ENCODE measurements at regions of chr22 and their contacts with region 1.

Region 1: GRCh38 chr22:33271390-33272161 is 213.4 kb upstream of the SYN3 start:
- DNase-seq: peak; percentile 13 to 81
- H3K4me3 ChIP-seq: peak overlapping the region in 1 of 2 donors; percentile 31
- H3K27ac ChIP-seq: peak overlapping the region in 1 of 2 donors; percentile 55
- H3K4me1 ChIP-seq: peaks cover 5 to 7% of the 10 kb centered on the region in 2 donors
- H3K27me3 ChIP-seq: no peaks in the 10 kb centered on the region
- CTCF ChIP-seq: peak in 2 of 3 experiments; percentile 8 to 29

Region 2: DNA sequence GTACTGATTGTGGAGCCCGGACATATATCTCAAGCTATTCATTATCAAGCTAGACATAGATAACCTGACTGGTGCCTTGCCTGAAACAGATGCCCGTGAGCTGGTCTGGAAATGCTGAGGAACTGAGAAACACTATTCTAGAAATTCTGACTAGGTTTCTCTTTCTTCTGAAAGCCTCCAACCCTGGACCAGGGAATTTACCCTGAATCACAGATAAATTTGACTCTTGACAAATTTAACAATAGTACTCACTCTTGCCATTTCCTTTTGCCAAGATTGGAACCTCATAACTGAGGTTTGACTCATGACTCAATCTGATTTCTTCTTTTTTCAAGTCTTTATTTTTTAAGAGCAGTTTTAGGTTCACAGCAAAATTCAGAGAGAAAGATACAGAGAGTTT is 23.8 kb before region 1 on chr22:
- intact Hi-C with region 1: loop called (anchors 2 kb)
- DNase-seq: no peak
- H3K4me3 ChIP-seq: no peak overlapping the region
- H3K27ac ChIP-seq: peak overlapping the region; percentile 4 to 6
- H3K4me1 ChIP-seq: peaks cover 0 to 7% of the 10 kb centered on the region in 2 donors
- H3K27me3 ChIP-seq: no peaks in the 10 kb centered on the region
- CTCF ChIP-seq: no peak

Region 3: DNA sequence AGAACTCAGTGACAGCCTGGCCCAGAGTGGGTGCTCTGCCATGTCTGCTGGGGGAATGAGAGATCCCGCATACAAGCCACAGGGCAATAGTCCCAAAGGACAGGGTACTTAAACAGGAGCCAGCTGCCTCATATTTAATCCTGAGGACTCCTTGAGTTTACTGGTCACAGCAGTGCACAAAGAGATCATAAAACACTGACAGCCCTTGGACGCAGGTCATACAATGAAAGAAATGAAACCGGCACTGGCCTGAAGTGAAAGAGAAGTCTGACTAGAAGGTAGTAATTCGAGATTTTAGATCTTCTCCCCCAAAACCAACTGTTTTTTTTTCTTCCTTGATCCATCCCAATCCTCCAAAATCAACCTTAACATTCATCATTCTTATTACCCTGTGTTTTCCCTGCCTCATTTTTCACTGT is 86.4 kb after region 1 on chr22:
- intact Hi-C with region 1: no loop called
- DNase-seq: no peak
- H3K4me3 ChIP-seq: no peak overlapping the region
- H3K27ac ChIP-seq: no peak overlapping the region
- H3K4me1 ChIP-seq: no peaks in the 10 kb centered on the region
- H3K27me3 ChIP-seq: no peaks in the 10 kb centered on the region
- CTCF ChIP-seq: no peak

Measured in ascending aorta (tissue), 2 donors.